ENCODE measurements at regions of chr12 and their contacts with region 1.

Region 1: GRCh38 chr12:116631619-116632018 is 72.4 kb downstream of the MAP1LC3B2 start:
- DNase-seq: no peak
- ATAC-seq: no peak
- H3K4me3 ChIP-seq: no peak overlapping the region
- H3K27ac ChIP-seq: no peak overlapping the region
- H3K4me1 ChIP-seq: no peaks in the 10 kb centered on the region
- H3K27me3 ChIP-seq: no peaks in the 10 kb centered on the region
- CTCF ChIP-seq: no peak

Region 2: GRCh38 chr12:116613256-116613655 is 18.4 kb before region 1 on chr12:
- CTCF ChIA-PET with region 1: interaction called, 14 read pairs
- POLR2A ChIA-PET with region 1: no interaction called
- in situ Hi-C with region 1: no loop called
- intact Hi-C with region 1: no loop called
- DNase-seq: no peak
- ATAC-seq: peak; percentile 33; the same call in 1 of the 2 replicates
- H3K4me3 ChIP-seq: no peak overlapping the region
- H3K27ac ChIP-seq: no peak overlapping the region
- H3K4me1 ChIP-seq: peaks cover 5% of the 10 kb centered on the region
- H3K27me3 ChIP-seq: no peaks in the 10 kb centered on the region
- CTCF ChIP-seq: no peak

Region 3: GRCh38 chr12:116661341-116661740 is 29.7 kb after region 1 on chr12:
- CTCF ChIA-PET with region 1: interaction called, 12 read pairs
- POLR2A ChIA-PET with region 1: no interaction called
- in situ Hi-C with region 1: no loop called
- intact Hi-C with region 1: no loop called
- DNase-seq: no peak
- ATAC-seq: no peak
- H3K4me3 ChIP-seq: no peak overlapping the region
- H3K27ac ChIP-seq: no peak overlapping the region
- H3K4me1 ChIP-seq: peaks cover 39% of the 10 kb centered on the region
- H3K27me3 ChIP-seq: no peaks in the 10 kb centered on the region
- CTCF ChIP-seq: no peak